Thyroid gland (tissue), 4 donors: ENCODE measurements at regions of chr12 and their contacts with region 1.

Region 1: DNA sequence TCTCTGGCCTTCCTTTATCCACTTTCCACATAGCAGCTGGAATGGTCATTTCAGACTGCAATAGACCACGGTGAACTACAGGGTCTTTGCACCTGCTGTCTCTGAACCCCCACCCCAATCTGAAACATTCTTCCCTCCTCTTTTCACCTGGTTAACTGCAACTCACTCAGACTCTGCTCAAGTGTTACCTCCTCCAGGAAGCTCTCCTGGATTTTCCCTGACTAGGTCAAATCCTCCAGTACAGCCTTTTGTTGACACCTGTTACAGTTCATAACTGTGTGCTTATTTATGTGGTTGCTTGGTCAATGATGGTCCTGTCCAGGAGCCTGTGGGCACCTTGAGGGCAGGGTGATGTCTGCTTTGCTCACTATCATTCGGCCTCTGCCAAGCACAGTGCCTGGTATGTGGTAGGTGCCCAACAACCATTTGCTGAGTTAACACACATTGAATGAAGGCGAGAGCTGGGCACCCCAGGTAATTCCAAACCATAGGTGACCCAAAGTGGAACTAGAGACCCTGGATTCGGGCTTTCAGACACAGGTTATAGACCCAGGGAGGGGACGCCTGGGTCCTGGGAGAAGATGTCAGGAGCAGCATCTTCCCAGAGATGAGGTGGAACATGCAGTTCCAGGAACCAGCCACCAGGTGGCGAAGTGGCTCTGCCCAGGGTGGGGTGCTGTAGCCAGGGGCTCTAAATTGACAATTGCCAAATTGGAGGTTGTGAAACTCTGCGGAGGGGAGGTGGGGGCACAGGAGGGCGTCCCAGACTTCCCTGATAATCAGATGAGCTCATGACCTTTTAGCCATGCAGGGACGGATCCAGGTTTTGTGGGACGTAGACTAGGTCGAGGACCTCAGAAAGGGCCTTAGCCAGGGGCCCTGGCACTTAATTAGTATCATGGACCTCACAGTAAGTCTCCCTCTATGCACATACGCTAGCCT is 28.1 kb downstream of the TRPV4 start:
- DNase-seq: peak; percentile 56 to 60
- H3K4me3 ChIP-seq: no peak overlapping the region
- H3K27ac ChIP-seq: no peak overlapping the region
- H3K4me1 ChIP-seq: no peaks in the 10 kb centered on the region
- H3K27me3 ChIP-seq: no peaks in the 10 kb centered on the region
- CTCF ChIP-seq: peak; percentile 73 to 97 (median 88)
- POLR2A ChIP-seq: no peak

Region 2: DNA sequence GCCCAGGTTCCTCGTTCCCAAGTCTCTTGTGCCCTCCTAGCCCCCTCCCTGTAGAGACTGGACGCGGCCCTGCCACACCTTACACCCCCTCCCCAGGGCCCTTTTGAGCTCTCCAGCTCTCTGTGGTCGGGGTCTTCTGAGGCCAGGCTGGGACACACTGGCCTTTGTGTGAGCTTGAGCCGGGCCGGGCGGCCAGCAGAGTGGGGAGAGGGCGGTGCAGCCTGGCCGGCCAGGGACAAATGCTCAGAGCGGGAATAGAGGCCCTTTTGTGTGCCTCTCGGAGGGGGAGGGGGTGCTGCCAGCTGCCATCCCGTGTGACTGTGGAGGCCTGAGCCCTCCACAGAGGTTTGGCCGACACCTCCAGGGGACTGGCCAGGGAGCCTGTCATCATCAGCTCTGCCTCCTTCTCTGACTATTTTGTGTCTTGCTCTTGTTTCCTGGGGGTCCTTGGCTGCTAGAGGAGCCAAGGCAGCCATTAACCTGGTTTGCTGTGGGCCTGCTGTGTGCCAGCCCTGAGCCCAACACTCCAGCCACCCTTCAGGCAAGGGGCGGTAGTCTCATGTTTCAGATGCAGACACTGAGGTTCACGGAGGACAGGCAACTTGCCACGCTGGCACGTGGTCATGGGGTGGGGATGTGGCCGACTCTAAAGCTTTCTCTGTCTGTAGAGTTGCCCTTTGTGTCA is 77.9 kb before region 1 on chr12:
- intact Hi-C with region 1: no loop called
- DNase-seq: no peak
- H3K4me3 ChIP-seq: no peak overlapping the region
- H3K27ac ChIP-seq: no peak overlapping the region
- H3K4me1 ChIP-seq: no peaks in the 10 kb centered on the region
- H3K27me3 ChIP-seq: no peaks in the 10 kb centered on the region
- CTCF ChIP-seq: no peak
- POLR2A ChIP-seq: no peak

Region 3: GRCh38 chr12:109844983-109845823 is 40.1 kb after region 1 on chr12:
- intact Hi-C with region 1: loop called (anchors 2 kb)
- DNase-seq: peak; percentile 86 to 90
- H3K4me3 ChIP-seq: no peak overlapping the region
- H3K27ac ChIP-seq: no peak overlapping the region
- H3K4me1 ChIP-seq: peaks cover 3 to 11% of the 10 kb centered on the region in 2 donors
- H3K27me3 ChIP-seq: no peaks in the 10 kb centered on the region
- CTCF ChIP-seq: peak; percentile 82 to 99 (median 98)
- POLR2A ChIP-seq: no peak

Region 4: GRCh38 chr12:109880016-109880931 is 75.2 kb after region 1 on chr12 and contains the start of gene GLTP:
- intact Hi-C with region 1: loop called (anchors 5 kb)
- DNase-seq: peak; percentile 86 to 88
- H3K4me3 ChIP-seq: peak within 1 kb of the TSS; percentile 53 to 67 (median 61)
- H3K27ac ChIP-seq: peak within 1 kb of the TSS in 2 of 3 donors; percentile 54 to 66
- H3K4me1 ChIP-seq: peaks cover 33 to 39% of the 10 kb centered on the region in 2 donors
- H3K27me3 ChIP-seq: no peaks in the 10 kb centered on the region
- CTCF ChIP-seq: peak in 4 of 6 experiments; percentile 30 to 100 (median 96)
- POLR2A ChIP-seq: peak in 1 of 2 donors; percentile 76
- total RNA-seq, gene GLTP: 49.9 to 72.0 (median 60.2) TPM